HCT116 (cell line): ENCODE measurements at regions of chr3 and their contacts with region 1.

Region 1: GRCh38 chr3:168865022-168865551 is 769.4 kb upstream of the GOLIM4 start:
- DNase-seq: no peak
- ATAC-seq: no peak
- H3K4me3 ChIP-seq: no peak overlapping the region
- H3K27ac ChIP-seq: no peak overlapping the region
- H3K4me1 ChIP-seq: no peaks in the 10 kb centered on the region
- H3K27me3 ChIP-seq: peaks cover 16% of the 10 kb centered on the region
- CTCF ChIP-seq: peak; percentile 52 to 65 (median 61)
- POLR2A ChIP-seq: no peak
- RAD21 ChIP-seq: peak; percentile 60

Region 2: DNA sequence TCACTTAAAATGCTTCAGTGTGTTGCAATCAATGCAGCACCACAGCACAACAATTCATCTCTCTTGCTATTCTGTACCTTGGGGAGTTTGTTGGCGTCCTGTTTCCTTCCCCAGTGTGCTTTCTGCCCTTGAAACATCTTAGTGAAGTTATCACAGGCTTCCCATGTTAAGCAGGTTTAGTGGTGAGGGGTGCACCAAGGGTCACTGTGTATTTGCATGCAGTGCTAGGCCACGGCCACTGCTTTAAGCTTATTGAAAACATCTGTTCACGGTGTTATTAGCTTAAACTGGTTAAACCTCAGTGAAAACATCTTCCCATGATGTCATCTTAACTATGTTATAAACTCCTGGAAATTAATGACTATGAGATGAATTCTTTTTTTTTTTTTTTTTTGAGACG is 552.1 kb before region 1 on chr3:
- CTCF ChIA-PET with region 1: no interaction called
- POLR2A ChIA-PET with region 1: no interaction called
- RAD21 ChIA-PET with region 1: no interaction called
- intact Hi-C with region 1: no loop called
- DNase-seq: no peak
- ATAC-seq: no peak
- H3K4me3 ChIP-seq: no peak overlapping the region
- H3K27ac ChIP-seq: no peak overlapping the region
- H3K4me1 ChIP-seq: no peaks in the 10 kb centered on the region
- H3K27me3 ChIP-seq: no peaks in the 10 kb centered on the region
- CTCF ChIP-seq: no peak
- POLR2A ChIP-seq: no peak
- RAD21 ChIP-seq: no peak

Region 3: GRCh38 chr3:168878655-168879054 is 13.6 kb after region 1 on chr3:
- CTCF ChIA-PET with region 1: interaction called, 27 read pairs
- POLR2A ChIA-PET with region 1: no interaction called
- RAD21 ChIA-PET with region 1: no interaction called
- intact Hi-C with region 1: no loop called
- DNase-seq: no peak
- ATAC-seq: no peak
- H3K4me3 ChIP-seq: no peak overlapping the region
- H3K27ac ChIP-seq: no peak overlapping the region
- H3K4me1 ChIP-seq: peaks cover 6 to 13% of the 10 kb centered on the region in 2 experiments; a peak in 3 of 4 replicates
- H3K27me3 ChIP-seq: no peaks in the 10 kb centered on the region
- CTCF ChIP-seq: no peak
- POLR2A ChIP-seq: no peak
- RAD21 ChIP-seq: no peak

Region 4: DNA sequence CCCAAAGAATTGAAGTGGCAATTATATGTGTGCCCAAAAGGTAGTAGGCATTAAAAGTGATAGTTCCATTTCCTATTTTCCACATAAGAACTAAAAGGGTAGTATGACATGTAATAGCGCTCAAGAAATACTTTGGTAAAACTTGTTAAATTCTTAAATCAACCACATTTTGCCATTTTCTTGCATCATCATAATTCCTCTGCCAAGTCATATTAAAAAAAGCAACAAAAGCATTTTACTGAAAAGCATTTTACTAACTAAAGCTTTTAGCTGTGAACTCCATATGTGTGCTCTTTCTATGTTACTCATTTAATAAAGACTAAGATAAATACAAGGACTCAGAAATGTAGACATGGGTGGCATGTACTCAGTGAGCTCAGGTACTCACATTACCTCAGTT is 1242.9 kb after region 1 on chr3:
- CTCF ChIA-PET with region 1: no interaction called
- POLR2A ChIA-PET with region 1: no interaction called
- RAD21 ChIA-PET with region 1: no interaction called
- intact Hi-C with region 1: no loop called
- DNase-seq: no peak
- ATAC-seq: no peak
- H3K4me3 ChIP-seq: no peak overlapping the region
- H3K27ac ChIP-seq: no peak overlapping the region
- H3K4me1 ChIP-seq: no peaks in the 10 kb centered on the region
- H3K27me3 ChIP-seq: no peaks in the 10 kb centered on the region
- CTCF ChIP-seq: no peak
- POLR2A ChIP-seq: no peak
- RAD21 ChIP-seq: no peak